ENCODE measurements at regions of chr15 and their contacts with region 1.

Region 1: GRCh38 chr15:47987908-47988532 is 132.8 kb upstream of the SLC24A5 start:
- DNase-seq: peak; percentile 30
- H3K4me3 ChIP-seq: no peak overlapping the region
- H3K27ac ChIP-seq: no peak overlapping the region
- H3K4me1 ChIP-seq: no peaks in the 10 kb centered on the region
- H3K27me3 ChIP-seq: no peaks in the 10 kb centered on the region
- CTCF ChIP-seq: peak; percentile 53

Region 2: GRCh38 chr15:47473832-47474231 is 514.2 kb before region 1 on chr15:
- intact Hi-C with region 1: loop called (anchors 5 kb)
- DNase-seq: no peak
- H3K4me3 ChIP-seq: no peak overlapping the region
- H3K27ac ChIP-seq: no peak overlapping the region
- H3K4me1 ChIP-seq: no peaks in the 10 kb centered on the region
- H3K27me3 ChIP-seq: no peaks in the 10 kb centered on the region
- CTCF ChIP-seq: no peak

Region 3: GRCh38 chr15:47551079-47551478 is 436.9 kb before region 1 on chr15:
- intact Hi-C with region 1: loop called (anchors 10 kb)
- DNase-seq: no peak
- H3K4me3 ChIP-seq: no peak overlapping the region
- H3K27ac ChIP-seq: no peak overlapping the region
- H3K4me1 ChIP-seq: no peaks in the 10 kb centered on the region
- H3K27me3 ChIP-seq: no peaks in the 10 kb centered on the region
- CTCF ChIP-seq: no peak

Region 4: GRCh38 chr15:47717036-47717611 is 270.9 kb before region 1 on chr15 and contains the start of gene SEMA6D:
- intact Hi-C with region 1: loop called (anchors 5 kb)
- DNase-seq: peak; percentile 79
- H3K4me3 ChIP-seq: peak within 1 kb of the TSS; percentile 75
- H3K27ac ChIP-seq: peak within 1 kb of the TSS; percentile 71
- H3K4me1 ChIP-seq: peaks cover 5% of the 10 kb centered on the region
- H3K27me3 ChIP-seq: no peaks in the 10 kb centered on the region
- CTCF ChIP-seq: no peak
- total RNA-seq, gene SEMA6D: 26.4 to 34.7 TPM

Region 5: DNA sequence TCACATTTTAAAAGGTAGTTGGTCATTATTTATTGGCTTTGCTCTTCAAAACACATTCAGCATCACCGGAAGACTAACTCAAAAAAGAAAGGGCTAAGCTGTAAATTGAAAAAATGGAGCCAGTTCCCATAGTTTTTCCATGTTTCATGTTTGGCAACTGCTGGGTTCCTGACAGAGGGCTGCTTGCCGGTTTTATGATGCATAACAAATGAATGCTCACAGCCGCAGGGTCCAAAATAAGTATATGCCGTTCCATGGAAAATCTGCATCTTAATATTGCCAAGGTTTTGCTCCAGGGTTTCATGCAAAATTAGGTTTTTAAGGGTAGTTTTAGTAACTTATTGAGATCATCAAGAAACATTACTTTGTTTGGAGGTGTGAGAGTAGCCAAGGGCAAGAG is 233.9 kb after region 1 on chr15:
- intact Hi-C with region 1: no loop called
- DNase-seq: no peak
- H3K4me3 ChIP-seq: no peak overlapping the region
- H3K27ac ChIP-seq: no peak overlapping the region
- H3K4me1 ChIP-seq: no peaks in the 10 kb centered on the region
- H3K27me3 ChIP-seq: no peaks in the 10 kb centered on the region
- CTCF ChIP-seq: no peak

Measured in colonic mucosa (tissue), 4 donors.